ENCODE measurements at regions of chr6 and their contacts with region 1.

Region 1: DNA sequence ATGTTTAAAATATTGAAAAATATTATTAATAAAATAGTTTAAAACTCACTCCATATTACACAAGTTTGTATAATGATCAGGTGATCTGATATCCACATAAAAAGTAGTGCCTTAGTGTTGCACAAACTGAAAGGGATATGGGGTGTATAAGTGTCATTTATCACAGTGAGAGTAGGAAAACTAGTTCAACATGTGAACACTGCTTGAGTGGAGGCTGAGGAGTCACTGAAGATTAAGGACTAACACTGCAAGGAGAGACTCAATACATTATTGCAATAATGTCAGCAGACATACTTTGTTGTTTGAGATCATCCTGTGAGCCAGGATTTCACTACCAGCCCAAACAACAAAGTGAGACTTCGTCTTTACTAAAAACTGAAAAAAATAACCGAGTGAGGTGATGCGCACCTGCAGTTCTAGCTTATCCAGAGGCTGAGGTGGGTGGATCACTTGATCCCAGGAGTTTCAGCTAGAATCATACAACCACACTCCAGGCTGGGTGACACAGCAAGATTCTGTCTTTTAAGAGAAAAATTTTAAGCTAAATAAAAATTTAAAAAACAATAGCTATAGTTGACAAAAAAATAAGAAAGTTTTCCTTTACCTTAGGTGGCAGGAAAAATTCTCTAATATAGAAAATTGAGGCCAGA is 2.4 kb upstream of the KHDC1L start:
- DNase-seq: no peak
- H3K4me3 ChIP-seq: no peak overlapping the region
- H3K27ac ChIP-seq: no peak overlapping the region
- H3K4me1 ChIP-seq: no peaks in the 10 kb centered on the region
- H3K27me3 ChIP-seq: no peaks in the 10 kb centered on the region
- CTCF ChIP-seq: no peak
- EP300 ChIP-seq: no peak
- POLR2A ChIP-seq: no peak

Region 2: DNA sequence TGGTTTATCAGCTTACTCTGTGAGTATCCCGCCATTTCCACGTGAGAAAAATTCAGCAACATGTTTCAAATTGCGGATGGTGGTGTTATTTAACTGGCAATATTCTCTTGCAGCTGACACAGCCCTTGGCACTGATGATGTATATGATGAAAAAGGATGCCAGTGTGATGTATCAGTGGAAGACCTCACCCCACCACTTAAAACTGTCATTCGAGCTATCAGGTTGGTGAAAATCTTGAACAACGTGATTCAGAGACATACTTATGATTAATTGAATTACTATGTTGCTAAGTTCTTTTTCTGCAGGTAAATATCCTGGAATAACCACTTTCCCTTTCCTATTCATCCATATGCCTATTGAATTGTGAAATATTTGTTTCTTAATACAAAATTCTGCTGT is 58.1 kb before region 1 on chr6:
- intact Hi-C with region 1: loop called in 1 of 4 experiments (anchors 2 kb)
- DNase-seq: no peak
- H3K4me3 ChIP-seq: no peak overlapping the region
- H3K27ac ChIP-seq: no peak overlapping the region
- H3K4me1 ChIP-seq: no peaks in the 10 kb centered on the region
- H3K27me3 ChIP-seq: no peaks in the 10 kb centered on the region
- CTCF ChIP-seq: no peak
- EP300 ChIP-seq: no peak
- POLR2A ChIP-seq: no peak

Region 3: DNA sequence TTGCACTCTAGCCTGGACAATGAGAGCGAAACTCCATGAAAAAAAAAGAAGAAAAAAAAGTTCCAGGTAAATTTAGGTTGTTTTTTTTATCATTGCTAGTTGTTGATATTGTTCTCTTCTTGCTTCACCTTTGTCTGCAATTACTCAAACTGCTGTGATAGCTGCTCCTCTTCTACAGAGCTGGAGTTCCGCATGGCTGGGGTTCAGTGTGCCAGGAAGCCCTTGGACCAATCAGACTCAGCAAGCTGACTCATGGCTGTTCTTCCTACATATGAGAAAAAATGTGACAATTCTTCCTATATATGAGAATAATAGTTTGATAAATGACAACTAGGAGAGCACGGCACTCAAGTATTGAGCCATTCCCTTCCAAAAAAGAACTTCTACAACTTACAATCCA is 97.9 kb after region 1 on chr6:
- intact Hi-C with region 1: no loop called
- DNase-seq: no peak
- H3K4me3 ChIP-seq: no peak overlapping the region
- H3K27ac ChIP-seq: no peak overlapping the region
- H3K4me1 ChIP-seq: no peaks in the 10 kb centered on the region
- H3K27me3 ChIP-seq: no peaks in the 10 kb centered on the region
- CTCF ChIP-seq: no peak
- EP300 ChIP-seq: no peak
- POLR2A ChIP-seq: no peak

Measured in ovary (tissue), 10 donors.